ENCODE measurements at regions of chr9 and their contacts with region 1.

Region 1: DNA sequence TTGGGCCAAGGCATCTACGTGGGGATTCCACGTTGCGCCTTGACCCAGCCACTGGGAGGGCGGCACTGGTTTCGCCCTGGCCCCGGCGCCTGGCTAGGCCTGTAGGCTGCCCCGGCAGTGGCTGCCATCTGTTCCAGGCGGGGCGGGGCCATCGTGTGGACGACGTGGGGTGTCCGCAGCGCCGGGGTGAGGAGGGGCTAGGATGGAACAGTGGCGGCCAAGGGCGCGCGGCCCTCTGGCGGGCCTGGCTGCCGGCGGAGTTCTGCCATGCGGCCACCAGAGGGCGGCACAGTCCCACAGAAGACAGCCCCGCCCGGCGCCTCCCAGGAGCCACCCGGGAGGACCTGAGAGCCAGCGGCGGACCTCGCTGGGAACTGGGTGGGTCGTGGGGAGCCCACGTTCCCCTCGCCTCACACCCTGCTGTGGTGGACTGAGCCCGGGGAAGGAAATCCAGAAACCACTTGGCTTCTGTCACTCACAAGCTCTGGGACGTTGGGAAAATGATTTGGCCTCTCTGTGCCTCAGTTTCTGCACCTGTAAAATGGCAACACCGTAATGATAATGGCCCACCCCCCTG is 22.6 kb upstream of the RAPGEF1 start:
- DNase-seq: no peak
- H3K4me3 ChIP-seq: peak overlapping the region in 1 of 4 donors; percentile 24
- H3K27ac ChIP-seq: no peak overlapping the region
- H3K4me1 ChIP-seq: peaks cover 3 to 9% (median 7%) of the 10 kb centered on the region in 4 donors
- H3K27me3 ChIP-seq: peaks cover 0 to 56% (median 0%) of the 10 kb centered on the region in 4 donors
- CTCF ChIP-seq: peak; percentile 92 to 99 (median 98)
- EP300 ChIP-seq: no peak
- POLR2A ChIP-seq: no peak

Region 2: DNA sequence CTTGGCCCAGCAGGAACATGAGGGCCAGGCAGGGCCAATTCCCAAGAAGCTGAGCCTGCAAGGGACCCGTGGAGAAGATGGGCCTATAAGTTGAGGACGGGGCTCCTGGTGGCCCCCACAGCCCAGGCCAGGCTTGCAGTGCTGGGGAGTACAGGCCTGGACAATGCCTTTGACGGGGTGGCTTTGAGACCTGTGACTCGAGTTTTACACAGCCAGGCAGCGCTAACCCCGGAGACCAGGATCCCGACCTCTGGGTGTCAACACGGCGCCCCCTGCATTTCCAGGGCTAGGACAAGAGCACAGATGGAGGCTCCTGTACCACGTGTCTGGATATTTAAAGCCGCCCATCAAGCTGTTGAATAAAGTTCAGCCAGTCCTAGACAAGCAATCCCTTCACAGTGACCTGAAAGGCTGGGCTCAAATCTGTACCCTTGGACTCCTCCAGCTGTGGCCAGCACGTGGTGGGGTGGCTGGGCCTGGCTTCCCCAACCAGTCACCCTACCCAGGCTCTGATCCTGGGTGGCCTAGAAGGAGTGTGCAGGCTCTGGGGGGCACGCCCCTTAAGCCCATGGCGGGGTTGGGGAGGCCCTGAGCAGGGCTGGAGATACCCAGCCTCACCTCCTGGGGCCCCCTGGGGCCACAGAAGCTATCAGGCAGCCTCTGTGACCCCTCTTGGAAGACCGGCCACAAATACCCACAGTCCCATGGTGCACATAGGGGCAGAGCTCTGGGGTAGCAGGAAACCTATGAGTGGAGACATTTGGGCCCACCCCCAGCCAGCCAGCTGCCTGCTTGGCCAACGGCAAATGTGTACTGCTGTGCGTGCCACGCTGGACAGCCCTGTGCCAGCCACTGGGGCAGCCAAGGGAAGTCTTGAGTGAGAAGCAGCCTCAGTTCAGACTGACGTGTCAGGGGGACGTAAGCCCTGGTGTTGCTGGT is 488.1 kb after region 1 on chr9:
- intact Hi-C with region 1: loop called (anchors 5 kb)
- DNase-seq: no peak
- H3K4me3 ChIP-seq: no peak overlapping the region
- H3K27ac ChIP-seq: no peak overlapping the region
- H3K4me1 ChIP-seq: peaks cover 3 to 7% (median 6%) of the 10 kb centered on the region in 4 donors
- H3K27me3 ChIP-seq: peaks cover 0 to 47% (median 0%) of the 10 kb centered on the region in 4 donors
- CTCF ChIP-seq: no peak
- EP300 ChIP-seq: no peak
- POLR2A ChIP-seq: no peak

Measured in esophagus muscularis mucosa (tissue), 4 donors.